Psoas muscle (tissue), 8 donors: ENCODE measurements at regions of chr12 and their contacts with region 1.

Region 1: DNA sequence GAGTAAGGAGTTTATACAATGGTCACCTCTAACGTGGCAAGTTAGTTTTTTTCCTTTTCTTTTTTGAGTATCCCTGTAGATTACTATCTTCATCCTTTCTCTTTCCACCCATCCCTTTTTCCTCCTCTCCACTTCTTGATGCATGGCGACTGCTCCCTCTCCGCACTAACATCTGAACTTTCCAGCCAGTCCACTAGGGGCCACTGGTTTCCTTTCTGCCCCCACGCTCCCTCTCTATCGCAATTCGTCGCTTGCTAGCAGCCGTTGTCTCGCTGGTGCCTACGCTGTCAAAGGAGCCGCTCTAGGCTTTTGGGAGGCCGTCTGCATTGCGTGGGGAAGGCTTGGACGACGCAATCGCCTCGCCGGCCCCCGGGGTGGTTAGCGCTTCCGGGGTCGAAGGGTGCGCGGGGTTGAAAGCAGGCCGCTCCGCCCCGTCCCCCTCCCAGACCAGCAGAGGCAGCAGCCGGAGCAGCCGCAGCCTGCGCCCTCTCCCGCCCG is at the start of gene PCBP2:
- DNase-seq: peak; percentile 98 to 99
- ATAC-seq: peak; percentile 93 to 96 (median 94)
- H3K4me3 ChIP-seq: peak within 1 kb of the TSS; percentile 83
- H3K27ac ChIP-seq: peak within 1 kb of the TSS; percentile 93
- H3K4me1 ChIP-seq: peaks cover 30% of the 10 kb centered on the region
- H3K27me3 ChIP-seq: no peaks in the 10 kb centered on the region
- CTCF ChIP-seq: peak; percentile 81
- total RNA-seq, gene PCBP2: 354 to 507 (median 439) TPM

Region 2: DNA sequence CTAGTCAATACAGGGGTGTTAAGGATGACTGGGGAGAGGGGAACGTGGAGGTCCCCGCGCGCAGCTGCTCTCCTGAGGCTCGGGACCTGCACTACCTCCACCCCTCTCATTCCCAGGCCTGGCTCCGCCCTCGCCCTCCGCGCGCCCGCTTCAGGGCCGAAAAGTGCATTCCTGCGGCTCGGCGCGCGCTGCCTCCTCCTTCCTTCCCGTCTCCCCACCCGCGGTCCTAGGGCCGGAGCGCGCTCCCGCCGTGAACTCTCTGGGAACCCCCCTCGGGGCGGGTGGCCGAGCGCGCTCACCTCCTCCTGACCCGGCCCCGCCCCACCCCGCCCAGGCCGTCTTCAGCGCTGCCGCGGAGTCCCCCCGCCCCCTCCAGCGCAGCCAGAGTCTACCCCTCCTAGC is 230.9 kb before region 1 on chr12:
- intact Hi-C with region 1: loop called in 1 of 2 experiments (anchors 5 kb)
- DNase-seq: peak; percentile 91 to 95
- ATAC-seq: peak; percentile 80 to 86 (median 84)
- H3K4me3 ChIP-seq: peak overlapping the region; percentile 71
- H3K27ac ChIP-seq: peak overlapping the region; percentile 93
- H3K4me1 ChIP-seq: peaks cover 35% of the 10 kb centered on the region
- H3K27me3 ChIP-seq: no peaks in the 10 kb centered on the region
- CTCF ChIP-seq: no peak

Region 3: DNA sequence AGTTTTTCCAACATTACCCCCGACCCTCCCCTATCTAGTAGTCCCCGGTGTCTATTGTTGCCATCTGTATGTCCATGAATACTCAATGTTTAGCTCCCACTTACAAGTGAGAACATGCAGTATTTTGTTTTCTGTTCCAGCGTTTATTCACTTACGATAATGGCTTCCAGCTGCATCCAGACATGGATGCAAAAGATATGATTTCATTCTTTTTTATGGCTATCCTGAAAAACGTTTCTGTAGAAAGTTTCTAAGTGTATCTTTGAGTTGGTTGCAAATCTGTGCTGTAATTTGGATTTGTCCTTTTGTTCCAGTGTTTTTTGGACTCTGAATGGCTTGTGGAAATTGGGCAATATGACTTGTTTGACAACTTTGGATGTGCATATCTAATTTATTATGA is 60.0 kb before region 1 on chr12:
- intact Hi-C with region 1: no loop called
- DNase-seq: no peak
- ATAC-seq: no peak
- H3K4me3 ChIP-seq: no peak overlapping the region
- H3K27ac ChIP-seq: peak overlapping the region; percentile 79
- H3K4me1 ChIP-seq: peaks cover 50% of the 10 kb centered on the region
- H3K27me3 ChIP-seq: no peaks in the 10 kb centered on the region
- CTCF ChIP-seq: no peak

Region 4: GRCh38 chr12:53474819-53475218 is 23.1 kb after region 1 on chr12:
- intact Hi-C with region 1: loop called in 1 of 2 experiments (anchors 1 kb)
- DNase-seq: no peak
- ATAC-seq: no peak
- H3K4me3 ChIP-seq: no peak overlapping the region
- H3K27ac ChIP-seq: peak overlapping the region; percentile 10
- H3K4me1 ChIP-seq: peaks cover 68% of the 10 kb centered on the region
- H3K27me3 ChIP-seq: no peaks in the 10 kb centered on the region
- CTCF ChIP-seq: no peak

Region 5: DNA sequence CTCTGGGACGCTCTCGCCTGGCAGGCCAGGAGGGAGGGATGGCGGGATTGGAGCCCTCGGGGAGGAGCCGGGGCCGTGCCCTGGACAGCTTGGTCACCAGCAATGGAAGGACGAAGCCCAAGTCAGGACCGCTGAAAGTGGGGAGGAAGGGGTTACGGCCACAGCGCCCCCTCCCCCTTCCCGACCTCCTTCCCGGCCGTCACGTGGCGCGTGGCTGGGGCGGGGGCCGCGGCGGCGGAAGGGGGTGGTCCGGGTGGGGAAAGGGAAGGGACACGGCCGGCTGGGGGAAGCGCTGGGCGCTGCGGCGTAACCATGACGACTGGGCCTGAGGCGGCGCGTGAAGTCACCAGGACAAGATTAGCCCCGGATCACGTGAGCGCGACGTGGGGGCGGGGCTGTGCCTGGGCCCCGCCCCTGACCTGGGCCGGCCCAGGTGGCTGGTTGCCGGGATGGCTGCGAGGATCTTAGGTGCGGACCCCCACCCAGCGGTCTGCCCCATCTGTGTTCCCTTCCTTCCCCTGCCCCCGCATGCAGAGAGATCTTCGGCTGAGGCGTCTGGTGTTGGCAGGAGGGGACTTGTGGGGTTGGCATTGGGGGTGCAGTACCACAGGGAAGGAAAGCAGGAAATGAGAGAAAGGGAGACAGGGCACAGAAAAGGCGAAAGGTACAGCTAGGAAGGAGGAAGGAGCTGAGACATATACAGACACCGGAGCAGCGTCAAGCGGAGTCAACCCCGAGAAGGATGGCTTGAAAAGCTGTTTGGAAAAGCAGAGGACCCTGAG is 41.3 kb after region 1 on chr12:
- intact Hi-C with region 1: loop called (anchors 5 kb)
- DNase-seq: peak; percentile 91 to 96
- ATAC-seq: peak; percentile 94 to 96 (median 94)
- H3K4me3 ChIP-seq: peak overlapping the region; percentile 70
- H3K27ac ChIP-seq: peak overlapping the region; percentile 48
- H3K4me1 ChIP-seq: no peaks in the 10 kb centered on the region
- H3K27me3 ChIP-seq: no peaks in the 10 kb centered on the region
- CTCF ChIP-seq: no peak

Region 6: GRCh38 chr12:53500776-53501614 is 49.3 kb after region 1 on chr12 and contains the start of gene TARBP2:
- intact Hi-C with region 1: loop called in 1 of 2 experiments (anchors 5 kb)
- DNase-seq: peak; percentile 97 to 98
- ATAC-seq: peak; percentile 87 to 89 (median 88)
- H3K4me3 ChIP-seq: peak within 1 kb of the TSS; percentile 85
- H3K27ac ChIP-seq: peak within 1 kb of the TSS; percentile 96
- H3K4me1 ChIP-seq: peaks cover 20% of the 10 kb centered on the region
- H3K27me3 ChIP-seq: no peaks in the 10 kb centered on the region
- CTCF ChIP-seq: no peak
- total RNA-seq, gene TARBP2: 7.6 to 10.8 (median 10.4) TPM

Region 7: DNA sequence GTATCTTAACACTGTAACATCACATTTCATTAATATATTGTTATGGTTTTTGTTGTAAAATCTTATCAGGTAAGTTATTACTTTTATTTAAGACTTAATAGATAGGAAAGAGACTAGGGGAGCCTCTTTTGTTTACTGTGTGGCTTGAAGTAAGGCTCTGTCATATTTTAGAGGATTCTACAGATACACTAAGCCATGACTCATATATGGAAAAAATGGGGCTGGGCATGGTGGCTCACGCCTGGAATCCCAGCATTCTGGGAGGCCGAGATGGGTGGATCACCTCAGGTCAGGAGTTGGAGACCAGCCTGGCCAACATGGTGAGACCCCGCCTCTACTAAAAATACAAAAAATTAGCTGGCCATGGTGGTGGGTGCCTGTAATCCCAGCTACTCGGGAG is 79.2 kb after region 1 on chr12:
- intact Hi-C with region 1: no loop called
- DNase-seq: no peak
- ATAC-seq: no peak
- H3K4me3 ChIP-seq: no peak overlapping the region
- H3K27ac ChIP-seq: no peak overlapping the region
- H3K4me1 ChIP-seq: no peaks in the 10 kb centered on the region
- H3K27me3 ChIP-seq: no peaks in the 10 kb centered on the region
- CTCF ChIP-seq: no peak